ENCODE measurements at regions of chr14 and their contacts with region 1.

Region 1: DNA sequence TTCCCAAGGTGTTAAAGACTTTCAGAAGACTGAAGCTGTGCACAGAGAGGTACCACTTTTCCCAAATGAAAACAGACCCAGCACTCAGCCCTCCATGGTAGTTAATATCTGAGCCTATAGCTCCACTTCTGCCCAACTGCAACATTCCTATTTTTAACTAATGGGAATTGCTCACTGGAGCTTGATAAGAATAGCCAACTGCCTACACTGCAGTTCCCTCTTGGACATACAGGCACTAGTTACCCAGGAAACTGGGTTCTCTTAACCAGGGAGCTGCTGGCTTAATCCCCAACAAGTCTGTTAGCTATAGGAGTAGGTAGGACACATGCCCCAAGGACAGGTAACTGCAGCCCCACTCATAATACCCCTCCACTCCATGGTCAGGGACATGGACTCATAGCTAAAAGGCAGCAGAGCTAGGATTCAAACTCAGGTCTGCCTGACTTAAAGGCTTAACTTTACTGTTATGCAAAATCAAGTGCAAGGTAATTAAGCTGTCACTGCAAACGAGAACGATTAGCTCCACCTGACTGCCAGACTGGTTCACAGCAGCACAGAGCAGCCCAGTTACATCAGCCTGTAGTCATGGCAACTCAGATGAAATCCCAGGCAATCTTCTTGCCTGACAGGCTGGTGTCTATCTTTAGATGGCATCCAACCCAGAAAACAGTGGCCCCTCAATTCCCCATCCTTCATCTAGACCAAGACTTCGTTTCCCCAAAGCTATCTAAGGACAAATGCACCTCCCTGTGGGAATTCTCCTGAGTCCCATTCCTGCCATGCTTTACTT is 77.1 kb upstream of the ACTN1 start:
- DNase-seq: peak; percentile 59
- H3K4me3 Mint-ChIP-seq: no peak overlapping the region
- H3K27ac Mint-ChIP-seq: peak overlapping the region; percentile 62
- H3K4me1 Mint-ChIP-seq: peaks cover 18% of the 10 kb centered on the region
- H3K27me3 Mint-ChIP-seq: no peaks in the 10 kb centered on the region

Region 2: GRCh38 chr14:68047906-68048305 is 1008.3 kb before region 1 on chr14:
- CTCF ChIA-PET with region 1: no interaction called
- intact Hi-C with region 1: no loop called
- DNase-seq: no peak
- H3K4me3 Mint-ChIP-seq: no peak overlapping the region
- H3K27ac Mint-ChIP-seq: no peak overlapping the region
- H3K4me1 Mint-ChIP-seq: no peaks in the 10 kb centered on the region
- H3K27me3 Mint-ChIP-seq: no peaks in the 10 kb centered on the region

Region 3: DNA sequence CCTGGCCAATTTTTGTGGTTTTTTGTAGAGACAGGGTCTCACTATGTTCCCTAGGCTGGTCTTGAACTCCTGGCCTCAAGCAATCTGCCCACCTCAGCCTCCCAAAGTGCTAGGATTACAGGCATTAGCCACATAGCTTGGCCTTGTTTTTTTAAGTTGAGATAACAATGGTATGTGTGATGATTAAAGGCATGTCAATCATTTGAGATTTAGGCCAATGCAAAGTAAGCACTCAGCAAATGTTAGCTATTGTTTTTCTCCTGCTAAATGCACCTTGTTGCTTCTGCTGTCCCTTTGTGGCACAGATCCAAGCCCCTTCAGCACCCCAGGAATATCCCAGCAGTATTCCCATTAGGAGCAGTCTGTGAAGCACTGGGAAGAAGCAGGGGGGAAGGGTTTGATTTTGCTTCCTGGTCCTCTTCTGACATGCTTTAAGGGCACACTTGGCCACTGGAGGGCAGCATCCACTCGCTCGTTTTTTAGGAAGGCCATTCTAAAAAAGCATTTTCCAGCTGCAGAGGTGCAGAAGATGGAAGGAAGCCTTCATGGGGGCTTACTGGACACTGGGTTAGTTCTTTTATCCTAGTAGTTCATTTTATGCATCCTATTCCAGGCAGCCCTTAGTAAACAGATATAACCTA is 193.1 kb before region 1 on chr14:
- CTCF ChIA-PET with region 1: interaction called, 5 read pairs
- intact Hi-C with region 1: loop called (anchors 2 kb)
- DNase-seq: peak; percentile 92
- H3K4me3 Mint-ChIP-seq: no peak overlapping the region
- H3K27ac Mint-ChIP-seq: no peak overlapping the region
- H3K4me1 Mint-ChIP-seq: no peaks in the 10 kb centered on the region
- H3K27me3 Mint-ChIP-seq: no peaks in the 10 kb centered on the region

Region 4: GRCh38 chr14:69101331-69101826 is 45.2 kb after region 1 on chr14:
- CTCF ChIA-PET with region 1: interaction called, 3 read pairs
- intact Hi-C with region 1: loop called (anchors 5 kb)
- DNase-seq: peak; percentile 47
- H3K4me3 Mint-ChIP-seq: no peak overlapping the region
- H3K27ac Mint-ChIP-seq: peak overlapping the region; percentile 61
- H3K4me1 Mint-ChIP-seq: peaks cover 26% of the 10 kb centered on the region
- H3K27me3 Mint-ChIP-seq: no peaks in the 10 kb centered on the region

Region 5: DNA sequence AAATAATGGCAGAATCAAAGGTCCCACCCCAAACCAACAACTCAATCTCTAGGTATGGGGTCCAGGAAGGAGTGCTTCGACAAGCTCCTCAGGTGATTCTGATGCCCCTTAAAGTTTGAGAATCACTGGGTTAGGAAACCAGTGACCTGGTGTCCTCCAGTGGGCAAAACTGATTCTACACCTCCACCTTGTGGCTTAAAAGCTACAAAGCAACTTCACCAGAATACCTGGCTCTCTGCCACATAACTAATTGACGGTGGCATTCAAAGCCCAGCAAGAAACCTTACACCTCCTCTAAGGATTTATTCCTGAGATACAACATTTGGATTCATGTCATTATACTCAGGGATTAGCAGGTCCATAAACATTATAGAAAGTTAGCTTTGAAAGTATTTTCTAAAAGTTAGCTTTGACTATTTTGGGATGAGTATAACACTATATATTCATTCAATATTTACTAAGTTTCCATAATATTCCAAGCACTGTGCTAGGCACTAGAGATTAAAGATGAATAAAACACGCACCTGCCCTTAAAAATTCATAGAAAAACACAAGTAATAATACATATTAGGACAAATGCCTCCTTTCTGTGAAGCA is 51.3 kb after region 1 on chr14:
- CTCF ChIA-PET with region 1: interaction called, 10 read pairs
- intact Hi-C with region 1: loop called (anchors 5 kb)
- DNase-seq: peak; percentile 48
- H3K4me3 Mint-ChIP-seq: no peak overlapping the region
- H3K27ac Mint-ChIP-seq: no peak overlapping the region
- H3K4me1 Mint-ChIP-seq: peaks cover under 1% of the 10 kb centered on the region
- H3K27me3 Mint-ChIP-seq: no peaks in the 10 kb centered on the region

Measured in activated naive CD4-positive, alpha-beta T cell treated with anti-CD3 and anti-CD28 coated beads for 36 hours (primary cell).